Stomach (tissue), 19 donors: ENCODE measurements at regions of chr2 and their contacts with region 1.

Region 1: DNA sequence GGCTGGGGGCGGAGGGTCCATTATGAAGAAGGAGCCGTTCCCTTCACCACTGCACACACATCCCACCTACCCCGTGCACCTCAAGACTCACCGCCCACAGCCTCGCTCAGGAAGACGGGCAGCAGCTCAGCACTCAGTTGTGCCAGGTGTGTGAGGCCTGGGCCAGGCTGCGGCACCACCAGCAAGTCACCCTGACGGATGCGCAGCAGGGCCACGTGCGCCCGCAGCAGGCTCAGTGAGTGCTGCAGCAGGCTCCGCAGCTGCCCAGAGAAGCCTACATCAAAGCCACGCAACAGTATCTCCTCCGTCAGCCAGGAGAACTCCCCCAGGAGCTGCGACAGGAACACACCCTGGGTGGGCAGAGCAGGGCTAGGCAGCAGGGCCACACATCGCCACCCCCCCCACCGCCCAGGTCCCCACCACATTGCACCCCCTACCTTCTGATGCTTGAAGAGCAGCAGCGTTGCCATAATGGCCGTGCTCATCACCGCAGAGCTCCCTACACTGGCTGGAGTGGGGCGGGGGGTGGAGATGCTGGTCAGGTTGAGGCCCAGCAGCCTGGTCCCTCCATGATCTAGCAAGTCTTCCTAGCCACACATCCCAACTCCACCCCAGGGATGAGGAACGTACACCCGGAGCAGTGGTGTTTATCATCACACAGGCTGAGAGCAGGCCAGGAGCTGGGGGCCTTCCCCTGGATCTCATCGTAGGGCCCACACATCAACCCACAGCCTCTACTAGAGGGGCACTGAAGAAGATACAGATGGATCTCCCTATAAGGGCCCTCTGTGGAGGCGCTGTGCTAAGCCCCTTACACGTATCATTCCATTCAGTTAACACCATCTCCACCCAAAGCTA is 10.2 kb downstream of the GPAT2 start:
- DNase-seq: no peak
- H3K4me3 ChIP-seq: no peak overlapping the region
- H3K27ac ChIP-seq: no peak overlapping the region
- H3K4me1 ChIP-seq: peaks cover 0 to 6% (median 3%) of the 10 kb centered on the region in 4 donors
- H3K27me3 ChIP-seq: no peaks in the 10 kb centered on the region
- CTCF ChIP-seq: no peak
- EP300 ChIP-seq: no peak
- POLR2A ChIP-seq: no peak

Region 2: DNA sequence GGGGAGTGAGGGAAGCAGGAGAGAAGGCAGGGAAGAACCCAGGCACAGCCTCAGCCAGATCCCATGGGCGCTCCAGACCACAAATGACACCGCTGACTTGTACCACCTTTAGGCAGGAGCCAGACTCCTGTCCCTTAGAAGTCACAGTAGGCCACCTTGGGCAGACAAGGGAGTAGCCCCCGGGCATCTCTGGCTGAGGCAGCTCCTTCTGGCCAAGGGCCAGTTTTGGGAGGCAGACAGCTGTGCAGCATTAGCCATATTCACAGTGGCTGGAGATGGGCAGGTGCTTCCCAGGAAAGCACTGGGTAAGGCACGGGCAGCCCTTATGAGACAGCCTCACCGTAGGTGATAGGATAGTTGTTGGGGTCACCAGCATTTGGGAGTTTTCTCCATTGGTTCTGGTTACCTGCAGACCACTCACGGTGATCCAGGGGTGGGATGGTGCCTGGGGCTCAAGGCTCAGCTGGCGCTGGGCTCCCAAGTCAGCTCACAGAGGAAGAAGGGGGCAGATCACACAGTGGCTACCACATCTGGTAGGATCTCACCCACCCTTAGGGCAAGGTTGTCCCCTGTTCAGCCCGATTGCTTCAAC is 111.7 kb after region 1 on chr2:
- intact Hi-C with region 1: no loop called
- DNase-seq: no peak
- H3K4me3 ChIP-seq: no peak overlapping the region
- H3K27ac ChIP-seq: no peak overlapping the region
- H3K4me1 ChIP-seq: peaks cover 0 to 13% (median 5%) of the 10 kb centered on the region in 4 donors
- H3K27me3 ChIP-seq: peaks cover 0 to 28% (median 0%) of the 10 kb centered on the region in 3 donors
- CTCF ChIP-seq: no peak
- EP300 ChIP-seq: no peak
- POLR2A ChIP-seq: no peak

Region 3: DNA sequence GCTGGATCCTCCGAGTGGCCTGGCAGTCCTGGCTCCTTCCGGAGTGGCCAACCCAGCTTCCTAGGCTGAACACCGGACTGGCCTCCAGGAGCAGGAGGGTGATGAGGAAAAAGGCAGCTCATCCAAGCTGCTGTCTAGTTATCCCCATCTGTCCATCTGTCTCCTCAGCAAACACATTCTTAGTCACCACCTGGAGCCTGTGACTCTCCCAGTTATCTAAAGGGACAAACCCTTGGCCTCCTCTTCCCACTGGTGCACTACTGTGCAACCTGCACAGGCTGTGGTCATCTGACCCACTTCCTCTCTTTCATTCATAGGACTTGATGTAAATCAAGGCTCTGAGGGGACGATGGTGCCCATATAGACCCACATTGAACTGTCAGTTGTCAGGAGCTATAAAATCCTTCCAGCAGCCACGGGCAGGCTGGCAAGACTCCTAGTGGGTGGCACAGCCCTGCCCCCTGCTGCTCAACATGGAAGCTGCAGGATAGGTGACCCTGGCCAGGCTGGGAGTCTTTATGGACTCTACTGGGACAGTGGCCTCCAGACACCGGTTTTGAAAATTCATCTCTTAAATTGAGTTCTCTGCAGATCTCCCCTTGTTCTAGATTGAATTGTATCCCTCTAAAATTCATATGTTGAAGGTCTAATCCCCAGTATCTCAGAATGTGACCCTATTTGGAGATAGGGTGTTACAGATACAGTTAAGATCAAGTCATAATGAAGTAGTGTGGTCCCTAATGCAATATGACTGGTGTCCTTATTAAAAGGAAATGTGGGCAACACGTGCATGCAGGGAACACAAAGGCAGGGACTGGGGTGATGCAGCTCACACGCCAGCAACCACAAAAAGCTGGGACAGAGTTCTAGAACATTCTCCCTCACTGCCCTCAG is 149.9 kb after region 1 on chr2:
- intact Hi-C with region 1: loop called (anchors 10 kb)
- DNase-seq: peak; percentile 85 to 90
- H3K4me3 ChIP-seq: no peak overlapping the region
- H3K27ac ChIP-seq: no peak overlapping the region
- H3K4me1 ChIP-seq: no peaks in the 10 kb centered on the region
- H3K27me3 ChIP-seq: no peaks in the 10 kb centered on the region
- CTCF ChIP-seq: peak in 5 of 7 experiments; percentile 78 to 92 (median 86)
- EP300 ChIP-seq: no peak
- POLR2A ChIP-seq: no peak